T-cell (primary cell): ENCODE measurements at regions of chr20 and their contacts with region 1.

Region 1: GRCh38 chr20:12159261-12159660 is 241.6 kb downstream of the BTBD3 start:
- DNase-seq: no peak
- ATAC-seq: no peak
- H3K4me3 ChIP-seq: no peak overlapping the region
- H3K4me3 Mint-ChIP-seq: no peak overlapping the region
- H3K27ac ChIP-seq: no peak overlapping the region
- H3K27ac Mint-ChIP-seq: no peak overlapping the region
- H3K4me1 ChIP-seq: no peaks in the 10 kb centered on the region
- H3K4me1 Mint-ChIP-seq: no peaks in the 10 kb centered on the region
- H3K27me3 ChIP-seq: no peaks in the 10 kb centered on the region
- H3K27me3 Mint-ChIP-seq: no peaks in the 10 kb centered on the region

Region 2: DNA sequence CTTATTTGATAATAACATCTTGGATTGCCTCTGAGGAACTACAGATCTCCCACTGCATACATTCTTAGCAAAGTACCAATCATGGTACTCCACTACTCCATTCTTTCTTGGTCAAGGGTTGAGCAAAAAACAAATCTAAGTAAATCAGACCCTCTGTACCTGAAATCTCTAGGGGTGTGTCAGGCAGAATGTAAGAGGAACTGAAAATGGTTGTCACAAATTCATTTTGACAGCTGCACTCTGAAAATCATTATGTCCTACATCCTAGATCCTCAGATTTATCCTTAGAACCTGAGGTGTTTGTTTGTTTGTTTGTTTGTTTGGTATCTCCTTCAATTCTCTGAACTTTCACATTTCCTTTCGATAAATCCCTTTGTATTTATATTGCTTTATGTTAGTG is 674.8 kb before region 1 on chr20:
- CTCF ChIA-PET with region 1: no interaction called
- POLR2A ChIA-PET with region 1: no interaction called
- DNase-seq: no peak
- ATAC-seq: no peak
- H3K4me3 ChIP-seq: no peak overlapping the region
- H3K4me3 Mint-ChIP-seq: no peak overlapping the region
- H3K27ac ChIP-seq: no peak overlapping the region
- H3K27ac Mint-ChIP-seq: no peak overlapping the region
- H3K4me1 ChIP-seq: no peaks in the 10 kb centered on the region
- H3K4me1 Mint-ChIP-seq: no peaks in the 10 kb centered on the region
- H3K27me3 ChIP-seq: no peaks in the 10 kb centered on the region
- H3K27me3 Mint-ChIP-seq: no peaks in the 10 kb centered on the region

Region 3: GRCh38 chr20:11982289-11982954 is 176.8 kb before region 1 on chr20:
- CTCF ChIA-PET with region 1: interaction called in 1 of 2 experiments, 10 read pairs
- POLR2A ChIA-PET with region 1: no interaction called
- DNase-seq: no peak
- ATAC-seq: no peak
- H3K4me3 ChIP-seq: no peak overlapping the region
- H3K4me3 Mint-ChIP-seq: no peak overlapping the region
- H3K27ac ChIP-seq: no peak overlapping the region
- H3K27ac Mint-ChIP-seq: no peak overlapping the region
- H3K4me1 ChIP-seq: no peaks in the 10 kb centered on the region
- H3K4me1 Mint-ChIP-seq: no peaks in the 10 kb centered on the region
- H3K27me3 ChIP-seq: no peaks in the 10 kb centered on the region
- H3K27me3 Mint-ChIP-seq: peaks cover 0 to 6% of the 10 kb centered on the region in 2 donors